ENCODE measurements at regions of chr1 and their contacts with region 1.

Region 1: DNA sequence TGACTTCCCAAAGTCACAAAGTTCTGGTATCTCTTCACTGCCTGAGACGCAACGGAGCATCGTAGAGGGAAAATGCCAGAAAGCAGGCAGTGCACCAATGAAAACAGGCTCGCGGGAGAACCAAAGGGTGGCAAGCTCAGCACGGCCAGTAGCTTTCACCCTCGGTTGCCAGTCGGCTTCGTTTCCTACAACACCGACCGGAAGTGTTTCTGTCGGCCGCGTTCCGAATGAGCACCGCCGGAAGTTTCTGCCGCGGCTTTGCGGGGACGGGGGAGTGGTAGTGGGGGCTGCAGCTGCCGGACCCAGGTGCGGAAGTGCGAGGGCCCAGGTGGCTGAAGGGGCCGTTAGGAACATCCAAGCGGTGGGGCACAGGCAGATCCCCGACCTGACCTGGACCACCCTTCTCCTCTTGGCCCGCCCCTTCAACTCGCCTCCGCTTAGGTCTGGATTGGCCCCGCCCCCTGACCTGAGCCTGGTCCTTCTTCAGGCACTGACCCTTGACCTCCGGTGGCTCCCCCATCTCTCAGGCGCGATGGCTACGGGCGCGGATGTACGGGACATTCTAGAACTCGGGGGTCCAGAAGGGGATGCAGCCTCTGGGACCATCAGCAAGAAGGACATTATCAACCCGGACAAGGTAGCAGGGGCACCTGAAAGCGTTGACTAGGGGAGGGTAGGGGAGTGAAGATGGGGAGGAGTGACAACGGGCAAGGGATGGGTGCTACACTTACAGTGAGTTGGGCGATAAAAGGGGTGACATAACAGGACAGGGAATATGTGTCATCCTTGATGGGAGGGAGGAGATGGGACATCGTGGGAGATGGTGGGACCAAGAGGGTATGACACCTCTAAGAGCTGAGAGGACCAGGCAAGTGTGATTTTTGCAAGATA is at the start of gene DMAP1:
- DNase-seq: peak; percentile 36 to 82
- ATAC-seq: peak; percentile 85 to 91
- H3K4me3 ChIP-seq: peak within 1 kb of the TSS; percentile 83
- H3K27ac ChIP-seq: peak within 1 kb of the TSS; percentile 91 to 95
- H3K4me1 ChIP-seq: peaks cover 13% of the 10 kb centered on the region; the same call in 1 of the 3 replicates
- CTCF ChIP-seq: no peak
- EP300 ChIP-seq: no peak
- POLR2A ChIP-seq: peak; percentile 14
- RAD21 ChIP-seq: peak; percentile 27 to 46; a peak in 3 of 5 replicates
- polyA plus RNA-seq, gene DMAP1: 28.2 and 28.7 TPM in 2 replicates

Region 2: GRCh38 chr1:43868741-43869067 is 344.8 kb before region 1 on chr1:
- CTCF ChIA-PET with region 1: no interaction called
- POLR2A ChIA-PET with region 1: no interaction called
- DNase-seq: no peak
- ATAC-seq: no peak
- H3K4me3 ChIP-seq: no peak overlapping the region
- H3K27ac ChIP-seq: no peak overlapping the region
- H3K4me1 ChIP-seq: no peaks in the 10 kb centered on the region
- CTCF ChIP-seq: no peak
- EP300 ChIP-seq: no peak
- POLR2A ChIP-seq: no peak
- RAD21 ChIP-seq: no peak

Region 3: DNA sequence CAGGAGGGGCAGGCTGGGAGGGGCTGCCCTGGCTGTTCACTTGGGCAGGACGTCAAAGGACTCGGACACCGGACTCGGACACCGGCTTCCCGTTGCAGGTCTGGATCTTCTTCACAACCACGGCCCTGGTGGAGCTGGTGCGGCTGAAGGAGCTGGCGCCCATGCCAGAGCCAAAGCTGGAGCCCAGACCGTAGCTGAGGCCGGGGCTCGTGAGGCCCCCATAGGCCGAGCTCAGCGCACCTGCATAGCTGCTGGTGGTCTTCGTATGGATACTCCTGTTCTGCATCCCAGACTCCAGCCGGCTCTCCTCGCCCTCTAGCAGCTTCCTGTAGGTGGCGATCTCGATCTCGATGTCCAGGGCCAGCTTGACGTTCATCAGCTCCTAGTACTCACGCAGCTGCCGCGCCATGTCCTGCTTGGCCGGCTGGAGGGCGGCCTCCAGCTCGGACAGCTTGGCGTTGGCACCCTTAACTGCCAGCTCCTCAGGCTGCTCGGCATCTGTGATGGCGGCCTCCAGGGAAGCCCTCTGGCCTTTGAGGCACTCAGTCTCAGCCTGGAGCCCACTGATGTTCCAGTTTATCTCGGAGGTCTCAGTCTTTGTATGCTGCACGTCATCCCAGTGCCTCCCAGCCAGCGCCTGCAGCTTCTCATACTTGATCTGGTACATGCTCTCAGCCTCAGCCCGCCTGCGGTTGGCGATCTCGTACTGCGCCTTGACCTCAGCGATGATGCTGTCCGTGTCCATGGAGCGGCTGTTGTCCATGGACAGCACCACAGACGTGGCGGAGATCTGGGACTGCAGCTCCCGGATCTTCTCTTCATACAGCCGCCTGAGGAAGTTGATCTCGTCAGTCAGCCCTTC is 110.0 kb before region 1 on chr1:
- CTCF ChIA-PET with region 1: interaction called, 12 read pairs
- POLR2A ChIA-PET with region 1: interaction called, 5 read pairs
- DNase-seq: peak in 1 of 2 experiments; percentile 59
- ATAC-seq: peak in 1 of 2 experiments; percentile 36; a peak in 2 of 6 replicates
- H3K4me3 ChIP-seq: no peak overlapping the region
- H3K27ac ChIP-seq: peak overlapping the region in 1 of 2 experiments; percentile 60; a peak in 2 of 6 replicates
- H3K4me1 ChIP-seq: no peaks in the 10 kb centered on the region
- CTCF ChIP-seq: peak; percentile 20; the same call in 1 of the 3 replicates
- EP300 ChIP-seq: no peak
- POLR2A ChIP-seq: no peak
- RAD21 ChIP-seq: peak in 1 of 2 experiments; percentile 46; a peak in 4 of 5 replicates

Region 4: DNA sequence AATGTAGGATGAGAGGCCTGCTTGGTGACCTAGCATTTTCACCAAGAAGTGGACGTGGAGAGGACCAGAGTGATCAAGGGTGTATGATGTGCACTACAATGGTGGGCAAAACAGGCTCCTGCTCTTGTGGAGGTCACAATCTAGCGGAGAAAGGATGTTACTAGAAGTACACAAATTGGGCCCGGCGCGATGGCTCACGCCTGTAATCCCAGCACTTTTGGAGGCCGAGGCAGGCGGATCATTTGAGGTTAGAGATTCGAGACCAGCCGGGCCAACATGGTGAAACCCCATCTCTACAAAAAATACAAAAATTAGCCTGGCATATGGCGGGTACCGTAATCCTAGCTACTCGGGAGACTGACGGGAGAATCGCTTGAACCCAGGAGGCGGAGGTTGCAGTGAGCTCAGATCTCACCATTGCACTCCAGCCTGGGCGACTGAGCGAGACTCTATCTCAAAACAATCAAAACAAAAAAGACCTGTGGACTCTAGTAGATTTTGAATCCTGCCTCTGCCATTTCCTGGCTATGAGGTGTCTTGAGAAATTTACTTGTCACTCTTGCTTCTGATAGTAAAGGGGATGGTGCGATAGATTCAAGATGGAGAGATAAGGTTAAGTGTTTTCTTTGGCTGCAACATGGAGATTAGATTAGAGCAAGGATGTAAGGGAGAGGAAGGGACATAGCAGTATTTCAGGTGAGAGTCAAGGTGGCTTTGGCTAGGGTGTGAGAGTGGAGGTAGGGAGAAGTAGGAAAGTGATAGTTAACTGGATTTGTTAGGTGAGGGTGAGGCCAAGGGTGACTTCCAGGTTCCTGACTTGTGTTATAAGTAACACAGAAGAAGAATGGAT is 79.2 kb before region 1 on chr1:
- CTCF ChIA-PET with region 1: no interaction called
- POLR2A ChIA-PET with region 1: no interaction called
- DNase-seq: no peak
- ATAC-seq: no peak
- H3K4me3 ChIP-seq: no peak overlapping the region
- H3K27ac ChIP-seq: no peak overlapping the region
- H3K4me1 ChIP-seq: no peaks in the 10 kb centered on the region
- CTCF ChIP-seq: no peak
- EP300 ChIP-seq: no peak
- POLR2A ChIP-seq: no peak
- RAD21 ChIP-seq: no peak

Region 5: GRCh38 chr1:44235808-44236207 is 22.3 kb after region 1 on chr1:
- CTCF ChIA-PET with region 1: interaction called, 11 read pairs
- POLR2A ChIA-PET with region 1: no interaction called
- DNase-seq: no peak
- ATAC-seq: no peak
- H3K4me3 ChIP-seq: no peak overlapping the region
- H3K27ac ChIP-seq: no peak overlapping the region
- H3K4me1 ChIP-seq: no peaks in the 10 kb centered on the region
- CTCF ChIP-seq: no peak
- EP300 ChIP-seq: no peak
- POLR2A ChIP-seq: no peak
- RAD21 ChIP-seq: no peak

Region 6: DNA sequence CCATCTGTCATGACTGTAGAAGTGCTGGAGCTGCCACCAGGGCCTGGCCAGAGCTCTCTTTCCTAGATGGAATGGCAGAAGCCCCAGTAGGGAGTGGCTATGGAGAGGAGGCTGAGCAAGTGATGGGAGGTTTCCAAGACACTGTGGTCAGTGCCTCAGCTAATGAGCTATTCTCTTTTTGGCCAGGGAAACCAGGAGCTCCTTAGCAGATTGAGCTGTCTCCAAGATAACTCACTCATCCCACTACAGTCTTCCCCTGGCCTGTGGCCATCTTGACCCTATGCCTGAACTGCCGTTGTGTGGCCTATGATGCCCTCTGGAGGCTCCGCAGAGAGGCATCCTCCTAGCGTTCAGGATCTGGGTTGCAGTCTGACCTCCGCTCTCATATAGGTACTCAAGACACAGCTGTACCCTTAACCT is 81.1 kb after region 1 on chr1:
- CTCF ChIA-PET with region 1: interaction called, 12 read pairs
- POLR2A ChIA-PET with region 1: no interaction called
- DNase-seq: peak; percentile 28 to 32
- ATAC-seq: peak; percentile 64 to 92; a peak in 5 of 6 replicates
- H3K4me3 ChIP-seq: no peak overlapping the region
- H3K27ac ChIP-seq: no peak overlapping the region
- H3K4me1 ChIP-seq: no peaks in the 10 kb centered on the region
- CTCF ChIP-seq: peak; percentile 21; the same call in 2 of the 3 replicates
- EP300 ChIP-seq: no peak
- POLR2A ChIP-seq: no peak
- RAD21 ChIP-seq: peak in 1 of 2 experiments; percentile 57; a peak in 3 of 5 replicates

Region 7: GRCh38 chr1:44417351-44418021 is 204.0 kb after region 1 on chr1:
- CTCF ChIA-PET with region 1: no interaction called
- POLR2A ChIA-PET with region 1: no interaction called
- DNase-seq: no peak
- ATAC-seq: no peak
- H3K4me3 ChIP-seq: no peak overlapping the region
- H3K27ac ChIP-seq: no peak overlapping the region
- H3K4me1 ChIP-seq: no peaks in the 10 kb centered on the region
- CTCF ChIP-seq: no peak
- EP300 ChIP-seq: no peak
- POLR2A ChIP-seq: no peak
- RAD21 ChIP-seq: no peak

Region 8: GRCh38 chr1:44594871-44595746 is 381.6 kb after region 1 on chr1:
- CTCF ChIA-PET with region 1: interaction called, 51 read pairs
- POLR2A ChIA-PET with region 1: no interaction called
- DNase-seq: peak; percentile 47 to 90
- ATAC-seq: peak; percentile 97 to 99
- H3K4me3 ChIP-seq: no peak overlapping the region
- H3K27ac ChIP-seq: no peak overlapping the region
- H3K4me1 ChIP-seq: no peaks in the 10 kb centered on the region
- CTCF ChIP-seq: peak; percentile 77
- EP300 ChIP-seq: no peak
- POLR2A ChIP-seq: no peak
- RAD21 ChIP-seq: peak; percentile 91 to 93

Measured in A549 (cell line).